ENCODE measurements at regions of chr6 and their contacts with region 1.

Region 1: DNA sequence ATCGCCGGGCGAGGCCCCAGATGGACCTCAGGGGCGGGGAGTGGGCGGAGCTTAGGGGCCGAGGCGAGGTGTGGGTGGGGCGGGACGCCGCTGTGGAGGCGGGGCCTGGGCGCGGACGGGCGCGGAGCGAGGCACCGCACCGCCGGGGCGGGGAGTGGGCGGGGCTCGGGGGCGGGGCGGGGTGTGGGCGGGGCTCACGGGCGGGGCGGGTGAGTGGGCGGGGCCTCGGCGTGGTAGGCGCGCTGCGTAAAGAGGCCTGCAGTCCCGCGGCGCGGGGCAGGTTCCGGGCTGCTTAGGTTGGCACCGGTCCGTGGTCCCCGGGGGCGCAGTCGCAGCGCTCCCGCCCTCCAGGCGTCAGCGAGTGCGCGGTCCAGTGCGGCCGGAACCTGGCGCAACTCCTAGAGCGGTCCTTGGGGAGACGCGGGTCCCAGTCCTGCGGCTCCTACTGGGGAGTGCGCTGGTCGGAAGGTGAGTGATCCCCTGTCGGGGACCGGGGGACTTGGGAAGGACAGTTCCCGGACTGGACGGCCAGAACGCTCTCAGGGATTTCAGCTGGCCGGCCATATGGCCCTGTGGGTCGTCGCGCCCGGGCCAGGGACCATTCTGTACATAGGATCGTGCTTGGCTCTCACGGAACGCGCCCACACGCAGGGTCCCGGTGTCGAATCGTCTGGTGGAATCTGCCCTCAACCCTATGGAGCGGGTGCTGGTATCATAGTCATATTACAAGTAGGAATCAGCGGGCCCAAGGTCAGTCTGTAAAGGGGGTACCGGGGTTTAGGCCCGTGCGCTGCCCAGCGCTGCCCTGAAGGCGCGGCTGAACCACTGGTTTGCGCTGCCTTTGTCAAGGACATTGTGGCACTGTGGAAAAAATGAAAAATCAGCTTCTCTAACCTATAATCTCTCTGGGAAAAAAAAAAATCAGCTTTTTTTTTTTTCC is at the start of gene NQO2:
- DNase-seq: peak; percentile 99
- CTCF ChIP-seq: no peak

Region 2: DNA sequence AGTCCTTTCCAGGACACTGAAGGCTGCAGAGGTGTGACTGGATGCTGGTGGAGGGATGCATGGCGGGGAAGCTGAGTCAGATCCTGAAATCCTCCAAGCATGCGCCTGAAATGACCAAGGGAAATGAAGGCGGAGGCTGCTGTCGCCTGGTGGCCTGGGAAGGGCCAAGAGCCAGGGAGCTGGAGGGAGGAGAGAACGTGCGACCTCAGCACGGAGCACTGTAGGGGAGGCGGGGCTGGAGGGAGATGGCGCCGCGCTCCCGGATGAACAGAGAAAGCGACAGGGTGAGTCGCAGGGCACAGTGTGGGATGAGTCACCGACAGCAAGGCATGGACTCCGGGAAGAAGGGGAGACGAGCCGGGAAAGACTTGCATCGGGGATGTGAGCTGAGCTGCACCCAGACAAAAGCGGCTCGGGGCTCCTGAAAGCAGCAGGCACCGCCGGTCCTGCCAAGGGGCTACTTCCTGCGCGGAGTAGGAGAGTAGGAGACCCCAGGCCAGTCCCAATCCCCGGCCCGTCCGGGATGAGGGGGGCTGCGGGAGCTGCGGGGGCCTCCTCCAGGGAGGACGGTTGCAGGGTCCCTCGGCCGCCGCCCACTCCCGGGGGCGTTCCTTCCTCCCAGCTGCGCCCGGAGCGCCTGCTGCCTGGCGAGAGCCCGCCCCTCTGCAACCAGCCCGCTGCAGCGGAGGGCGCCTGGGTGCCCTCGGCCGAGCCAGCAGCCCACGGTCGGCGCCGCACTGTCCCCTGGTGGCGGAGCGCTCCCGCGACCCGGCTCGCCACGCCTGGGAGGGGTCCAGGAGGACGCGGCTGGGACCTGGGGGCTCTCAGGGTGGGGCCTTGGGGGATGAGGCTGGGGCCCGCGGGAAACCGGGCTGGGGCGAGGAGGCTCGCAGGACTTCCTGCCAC is 11.2 kb before region 1 on chr6:
- CTCF ChIA-PET with region 1: interaction called, 32 read pairs
- POLR2A ChIA-PET with region 1: no interaction called
- DNase-seq: peak; percentile 75
- CTCF ChIP-seq: peak; percentile 74

Region 3: DNA sequence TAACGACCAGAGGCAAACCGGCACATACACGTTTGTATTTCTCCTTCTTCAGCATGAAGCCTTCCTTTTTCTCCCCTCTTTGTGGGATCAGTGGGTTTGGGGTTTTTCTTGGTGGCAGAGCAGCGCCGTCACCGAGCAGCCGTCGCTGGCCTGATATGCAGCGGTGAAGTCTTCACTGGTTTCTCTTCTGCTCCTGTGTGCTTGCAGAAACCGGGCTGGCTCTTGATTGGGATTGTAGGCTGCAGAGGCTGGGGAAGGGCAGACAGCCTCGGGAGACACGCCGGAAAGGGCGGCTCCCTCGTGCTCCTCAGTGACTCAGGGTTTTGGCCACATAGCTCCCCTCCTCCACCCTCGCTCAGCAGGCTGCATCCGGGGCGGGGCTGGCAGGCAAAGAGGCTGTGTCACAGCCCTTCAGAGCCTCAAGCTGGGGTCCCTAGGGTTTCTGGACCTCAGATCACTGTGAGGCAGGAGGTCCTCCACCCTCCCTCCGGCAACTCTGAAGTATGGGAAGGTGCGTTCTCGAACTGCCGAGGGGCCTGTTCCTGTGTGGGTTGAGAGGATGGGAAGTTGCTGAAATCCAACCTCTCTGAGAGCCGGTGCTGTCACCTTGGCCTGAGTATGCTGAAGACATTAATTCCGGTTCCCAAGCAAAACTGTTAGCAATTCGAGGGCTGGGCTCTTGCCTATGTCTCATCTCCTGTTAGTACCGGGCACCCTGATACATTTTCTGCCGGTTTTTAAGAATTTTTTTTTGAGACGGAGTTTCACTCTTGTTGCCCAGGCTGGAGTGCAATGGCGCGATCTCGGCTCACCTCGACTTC is 24.0 kb after region 1 on chr6:
- CTCF ChIA-PET with region 1: interaction called, 55 read pairs
- POLR2A ChIA-PET with region 1: interaction called, 9 read pairs
- DNase-seq: peak; percentile 88
- CTCF ChIP-seq: no peak

Region 4: DNA sequence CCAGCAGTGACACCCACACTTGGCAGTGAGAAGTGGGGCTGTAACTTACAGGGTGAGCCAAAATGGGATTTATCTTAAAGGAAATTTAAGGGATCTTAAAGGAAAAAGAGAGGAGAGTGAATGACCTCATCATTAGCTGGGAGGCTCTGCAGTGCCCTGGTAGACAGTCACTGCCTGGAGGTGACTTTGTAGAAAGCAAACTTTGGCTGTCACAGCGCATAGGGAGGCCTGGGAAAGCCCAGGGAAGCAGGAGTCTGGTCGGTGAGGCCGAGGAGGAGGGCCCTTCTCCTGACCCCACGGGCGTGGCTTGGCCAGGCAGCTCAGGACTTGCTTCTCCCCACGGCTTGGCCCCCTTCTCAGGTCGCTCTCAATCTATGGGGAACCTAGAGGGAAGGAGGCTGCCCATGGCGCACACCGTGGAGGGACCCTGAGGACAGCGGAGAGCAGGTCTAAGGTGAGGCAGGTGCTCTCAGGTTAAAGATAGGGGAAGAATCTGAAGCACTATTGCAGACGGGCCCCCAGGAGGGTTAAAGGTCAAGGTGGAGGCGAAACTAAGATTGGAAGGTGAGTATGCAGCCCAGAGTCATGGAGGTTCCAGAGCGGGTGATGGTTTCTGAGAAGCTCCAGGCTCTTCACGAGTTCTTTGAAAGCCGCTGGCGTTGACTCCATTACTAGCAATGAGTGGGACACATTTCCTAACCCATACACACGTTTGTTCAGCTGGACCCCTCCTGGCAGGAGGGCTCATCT is 52.8 kb after region 1 on chr6:
- CTCF ChIA-PET with region 1: interaction called, 30 read pairs
- POLR2A ChIA-PET with region 1: interaction called, 4 read pairs
- DNase-seq: no peak
- CTCF ChIP-seq: no peak

Region 5: GRCh38 chr6:3063733-3064700 is 64.1 kb after region 1 on chr6:
- CTCF ChIA-PET with region 1: interaction called, 16 read pairs
- POLR2A ChIA-PET with region 1: interaction called, 12 read pairs
- DNase-seq: peak; percentile 92
- CTCF ChIP-seq: no peak